PC-9 (cell line): ENCODE measurements at regions of chr20 and their contacts with region 1.

Region 1: GRCh38 chr20:13546497-13547131 is 92.1 kb downstream of the TASP1 start:
- DNase-seq: peak; percentile 37 to 77
- H3K4me3 ChIP-seq: no peak overlapping the region
- H3K27ac ChIP-seq: no peak overlapping the region
- H3K4me1 ChIP-seq: no peaks in the 10 kb centered on the region
- H3K27me3 ChIP-seq: no peaks in the 10 kb centered on the region
- CTCF ChIP-seq: peak; percentile 83

Region 2: DNA sequence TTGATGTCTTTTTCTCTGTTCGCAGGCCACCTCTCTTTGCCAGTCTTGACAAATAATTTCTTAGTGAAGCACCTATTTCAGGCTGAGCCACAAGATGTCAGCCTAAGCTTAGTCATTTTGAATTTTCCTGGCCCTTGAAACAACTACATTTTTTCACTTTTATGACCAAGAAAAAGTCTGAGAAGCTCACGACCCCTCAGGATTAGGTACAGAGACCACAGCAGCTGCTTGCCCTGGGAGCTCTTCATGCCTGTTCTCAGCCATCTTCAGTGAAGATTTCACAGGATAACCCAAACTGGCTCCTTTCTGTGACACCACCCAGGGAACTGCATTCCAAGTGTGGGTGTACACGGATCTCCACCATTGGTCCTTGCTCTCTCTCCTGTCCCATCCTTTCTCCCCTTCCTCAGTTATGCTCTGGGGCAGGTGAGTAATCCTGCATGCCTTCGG is 576.2 kb before region 1 on chr20:
- CTCF ChIA-PET with region 1: interaction called, 14 read pairs
- POLR2A ChIA-PET with region 1: no interaction called
- intact Hi-C with region 1: no loop called
- DNase-seq: no peak
- H3K4me3 ChIP-seq: no peak overlapping the region
- H3K27ac ChIP-seq: no peak overlapping the region
- H3K4me1 ChIP-seq: no peaks in the 10 kb centered on the region
- H3K27me3 ChIP-seq: no peaks in the 10 kb centered on the region
- CTCF ChIP-seq: peak; percentile 63

Region 3: DNA sequence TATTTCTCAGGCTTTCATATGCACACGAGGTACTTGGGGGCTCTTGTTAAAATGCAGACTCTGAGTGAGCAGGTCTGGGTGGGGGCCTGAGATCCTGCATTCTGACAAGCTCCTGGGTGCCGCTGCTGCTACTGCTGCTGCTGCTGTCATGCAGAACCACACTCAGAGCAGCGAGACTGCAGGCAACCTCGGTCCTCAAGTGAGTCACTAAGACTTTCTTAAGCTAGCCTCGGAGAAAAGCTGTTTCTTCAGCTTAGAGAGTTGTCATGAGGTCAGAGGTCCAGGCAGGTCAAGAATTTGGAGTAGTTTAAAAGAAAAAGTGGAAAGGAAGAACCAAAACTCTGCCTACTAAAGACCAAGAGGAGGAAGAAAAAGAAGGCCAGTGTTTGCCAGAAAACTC is 444.9 kb before region 1 on chr20:
- CTCF ChIA-PET with region 1: no interaction called
- POLR2A ChIA-PET with region 1: no interaction called
- intact Hi-C with region 1: no loop called
- DNase-seq: no peak
- H3K4me3 ChIP-seq: no peak overlapping the region
- H3K27ac ChIP-seq: no peak overlapping the region
- H3K4me1 ChIP-seq: peaks cover 24% of the 10 kb centered on the region
- H3K27me3 ChIP-seq: no peaks in the 10 kb centered on the region
- CTCF ChIP-seq: no peak

Region 4: GRCh38 chr20:13119583-13119982 is 427.0 kb before region 1 on chr20:
- CTCF ChIA-PET with region 1: interaction called, 12 read pairs
- POLR2A ChIA-PET with region 1: no interaction called
- intact Hi-C with region 1: loop called (anchors 1 kb)
- DNase-seq: peak in 1 of 2 experiments; percentile 20
- H3K4me3 ChIP-seq: no peak overlapping the region
- H3K27ac ChIP-seq: no peak overlapping the region
- H3K4me1 ChIP-seq: no peaks in the 10 kb centered on the region
- H3K27me3 ChIP-seq: no peaks in the 10 kb centered on the region
- CTCF ChIP-seq: peak; percentile 91

Region 5: DNA sequence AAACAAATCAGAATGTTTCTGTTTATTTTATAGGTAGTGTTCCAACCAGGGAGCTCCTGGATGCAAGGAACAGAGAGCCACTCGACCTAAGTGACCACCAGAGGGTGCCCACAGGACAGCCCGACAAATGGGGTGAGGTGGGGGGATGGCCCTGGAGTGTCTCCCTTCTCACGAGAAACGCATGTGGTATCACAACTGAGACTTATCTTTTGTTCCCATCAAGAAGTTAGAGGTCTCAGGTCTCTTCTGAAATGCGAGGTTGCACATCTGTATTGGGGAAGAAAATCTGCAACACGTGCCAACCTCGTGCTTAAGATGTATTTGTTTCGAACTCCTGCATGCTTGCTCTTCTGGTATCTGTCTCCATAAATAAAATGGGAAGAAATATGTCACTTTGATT is 221.6 kb before region 1 on chr20:
- CTCF ChIA-PET with region 1: interaction called, 11 read pairs
- POLR2A ChIA-PET with region 1: no interaction called
- intact Hi-C with region 1: loop called (anchors 5 kb)
- DNase-seq: no peak
- H3K4me3 ChIP-seq: no peak overlapping the region
- H3K27ac ChIP-seq: no peak overlapping the region
- H3K4me1 ChIP-seq: no peaks in the 10 kb centered on the region
- H3K27me3 ChIP-seq: no peaks in the 10 kb centered on the region
- CTCF ChIP-seq: peak; percentile 54

Region 6: DNA sequence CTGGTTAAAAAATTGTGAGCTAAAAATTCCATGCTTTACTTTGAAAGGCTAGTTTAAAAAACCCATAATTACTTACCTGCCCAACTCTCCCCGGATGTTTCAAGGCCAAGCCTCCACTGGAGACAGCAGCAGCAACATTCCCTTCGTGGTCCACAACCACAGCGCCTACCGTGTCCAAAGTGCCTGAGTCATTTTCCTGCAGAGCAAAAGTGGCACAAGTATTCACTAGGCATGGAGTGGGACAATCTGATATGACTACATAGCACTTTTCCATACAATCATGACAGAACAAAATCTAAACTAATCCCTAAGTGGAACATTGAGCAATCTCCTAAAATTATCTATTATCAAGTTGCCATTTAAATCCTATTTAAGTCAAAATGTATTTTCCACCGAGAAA is 12.7 kb before region 1 on chr20:
- CTCF ChIA-PET with region 1: interaction called, 13 read pairs
- POLR2A ChIA-PET with region 1: interaction called, 4 read pairs
- intact Hi-C with region 1: no loop called
- DNase-seq: no peak
- H3K4me3 ChIP-seq: no peak overlapping the region
- H3K27ac ChIP-seq: no peak overlapping the region
- H3K4me1 ChIP-seq: no peaks in the 10 kb centered on the region
- H3K27me3 ChIP-seq: no peaks in the 10 kb centered on the region
- CTCF ChIP-seq: no peak